Activated CD8-positive, alpha-beta memory T cell treated with anti-CD3 and anti-CD28 coated beads, Interleukin-2, amount 10 ng/mL, durations not matched to agents 7 days and 5 days (primary cell): ENCODE measurements at regions of chr16 and their contacts with region 1.

Region 1: DNA sequence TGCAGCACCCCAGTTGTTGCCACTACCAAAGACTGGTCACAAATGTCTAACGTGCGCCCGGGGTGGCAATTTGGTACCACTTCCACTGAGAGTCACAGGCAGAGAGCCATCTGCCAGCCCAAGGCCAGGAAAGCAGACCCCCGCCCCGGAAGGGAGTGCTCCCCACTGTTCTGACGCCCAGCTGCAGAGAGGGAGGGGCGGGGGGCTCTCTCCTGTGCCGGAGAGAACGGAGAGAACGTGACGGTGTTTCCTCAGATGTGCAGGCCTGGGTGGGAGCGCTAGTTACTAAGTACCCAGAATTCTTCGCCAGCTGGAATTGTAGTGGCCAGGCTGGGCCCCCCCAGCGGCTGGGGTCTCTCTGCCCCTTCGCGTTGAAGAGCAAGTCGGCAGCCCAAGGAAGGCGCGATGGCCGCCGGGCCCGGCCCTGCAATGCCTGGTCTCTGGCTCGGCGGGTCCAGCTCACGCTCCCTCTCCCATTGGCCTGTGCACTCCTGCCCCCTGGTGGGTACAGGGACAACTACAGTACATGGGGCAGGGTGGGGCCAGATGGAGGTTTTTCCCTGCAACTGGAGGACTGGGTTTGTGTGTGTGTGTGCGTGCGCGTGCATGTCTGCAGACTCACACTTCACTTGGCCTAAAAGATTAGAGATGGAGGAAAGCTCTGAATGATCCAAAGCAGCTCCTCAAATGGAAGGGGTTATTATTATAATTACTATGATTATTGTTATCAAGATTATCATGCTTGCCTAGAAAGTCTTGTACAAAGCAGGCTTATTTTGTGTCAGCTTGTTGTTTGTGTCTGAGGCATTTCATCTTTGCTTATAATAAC is 107.1 kb downstream of the AMFR start:
- DNase-seq: peak; percentile 81
- ATAC-seq: peak; percentile 98
- H3K4me3 Mint-ChIP-seq: no peak overlapping the region
- H3K27ac Mint-ChIP-seq: no peak overlapping the region
- H3K4me1 Mint-ChIP-seq: no peaks in the 10 kb centered on the region
- H3K27me3 Mint-ChIP-seq: peaks cover 7% of the 10 kb centered on the region

Region 2: GRCh38 chr16:55944377-55944802 is 373.8 kb before region 1 on chr16:
- CTCF ChIA-PET with region 1: interaction called, 36 read pairs
- DNase-seq: peak; percentile 51
- ATAC-seq: peak; percentile 55
- H3K4me3 Mint-ChIP-seq: no peak overlapping the region
- H3K27ac Mint-ChIP-seq: no peak overlapping the region
- H3K4me1 Mint-ChIP-seq: no peaks in the 10 kb centered on the region
- H3K27me3 Mint-ChIP-seq: peaks cover 60% of the 10 kb centered on the region

Region 3: DNA sequence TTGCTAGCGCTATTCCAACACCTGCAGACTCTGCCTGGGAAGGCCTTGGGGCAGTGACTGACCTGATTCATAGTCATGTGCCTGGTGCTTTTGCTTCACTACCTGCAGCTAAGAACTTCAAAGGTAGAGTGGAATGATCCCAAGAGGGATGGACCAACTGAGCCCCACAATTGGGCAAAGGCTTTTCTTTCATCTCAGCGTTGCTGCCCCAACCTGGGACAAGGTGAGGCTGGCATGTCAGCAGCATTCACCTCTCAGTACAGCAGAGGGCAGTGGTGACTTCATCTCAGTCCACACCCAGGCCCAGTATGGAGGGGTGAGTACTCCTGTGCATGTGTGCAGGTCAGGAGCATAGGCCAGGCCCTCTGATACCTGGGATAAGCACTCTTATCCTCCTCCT is 276.5 kb before region 1 on chr16:
- CTCF ChIA-PET with region 1: interaction called, 19 read pairs
- DNase-seq: peak; percentile 45
- ATAC-seq: peak; percentile 65
- H3K4me3 Mint-ChIP-seq: no peak overlapping the region
- H3K27ac Mint-ChIP-seq: no peak overlapping the region
- H3K4me1 Mint-ChIP-seq: no peaks in the 10 kb centered on the region
- H3K27me3 Mint-ChIP-seq: peaks cover 13% of the 10 kb centered on the region

Region 4: DNA sequence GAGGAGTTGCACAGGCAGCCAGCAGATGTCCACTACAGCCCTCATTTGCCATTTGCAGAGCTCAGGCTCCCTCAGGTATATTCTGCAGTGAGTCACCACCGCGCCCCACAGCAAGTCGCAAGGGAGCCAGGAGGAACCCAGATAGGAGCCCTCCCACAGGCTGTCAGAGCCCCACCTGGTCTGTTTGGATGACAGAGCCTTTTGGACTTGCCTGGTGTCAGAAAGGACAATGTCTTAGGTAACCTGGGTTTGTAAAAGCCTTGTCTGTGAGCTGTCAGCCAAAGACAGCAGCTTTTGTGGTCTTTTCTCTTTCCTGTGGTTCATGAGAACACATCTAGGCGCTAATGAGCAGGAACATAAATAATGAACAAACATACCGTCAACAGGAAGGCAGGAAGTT is 56.1 kb before region 1 on chr16:
- CTCF ChIA-PET with region 1: interaction called, 15 read pairs
- DNase-seq: peak; percentile 72
- ATAC-seq: peak; percentile 88
- H3K4me3 Mint-ChIP-seq: peak overlapping the region; percentile 47
- H3K27ac Mint-ChIP-seq: peak overlapping the region; percentile 82
- H3K4me1 Mint-ChIP-seq: peaks cover 29% of the 10 kb centered on the region
- H3K27me3 Mint-ChIP-seq: no peaks in the 10 kb centered on the region

Region 5: GRCh38 chr16:56281256-56281805 is 36.9 kb before region 1 on chr16:
- CTCF ChIA-PET with region 1: interaction called, 12 read pairs
- DNase-seq: no peak
- ATAC-seq: no peak
- H3K4me3 Mint-ChIP-seq: no peak overlapping the region
- H3K27ac Mint-ChIP-seq: no peak overlapping the region
- H3K4me1 Mint-ChIP-seq: peaks cover 21% of the 10 kb centered on the region
- H3K27me3 Mint-ChIP-seq: no peaks in the 10 kb centered on the region

Region 6: GRCh38 chr16:56329887-56330286 is 11.7 kb after region 1 on chr16:
- CTCF ChIA-PET with region 1: interaction called, 13 read pairs
- DNase-seq: no peak
- ATAC-seq: no peak
- H3K4me3 Mint-ChIP-seq: no peak overlapping the region
- H3K27ac Mint-ChIP-seq: no peak overlapping the region
- H3K4me1 Mint-ChIP-seq: peaks cover 3% of the 10 kb centered on the region
- H3K27me3 Mint-ChIP-seq: no peaks in the 10 kb centered on the region

Region 7: GRCh38 chr16:56356276-56357240 is 38.3 kb after region 1 on chr16:
- CTCF ChIA-PET with region 1: interaction called, 13 read pairs
- DNase-seq: peak; percentile 79
- ATAC-seq: peak; percentile 91
- H3K4me3 Mint-ChIP-seq: peak overlapping the region; percentile 78
- H3K27ac Mint-ChIP-seq: peak overlapping the region; percentile 89
- H3K4me1 Mint-ChIP-seq: peaks cover 23% of the 10 kb centered on the region
- H3K27me3 Mint-ChIP-seq: no peaks in the 10 kb centered on the region